ENCODE measurements at regions of chr12 and their contacts with region 1.

Region 1: GRCh38 chr12:49507139-49507538 is 31.7 kb upstream of the KCNH3 start:
- DNase-seq: no peak
- H3K4me3 ChIP-seq: no peak overlapping the region
- H3K4me1 ChIP-seq: no peaks in the 10 kb centered on the region
- H3K27me3 ChIP-seq: no peaks in the 10 kb centered on the region

Region 2: GRCh38 chr12:49366652-49367380 is 140.3 kb before region 1 on chr12:
- in situ Hi-C with region 1: loop called (anchors 5 kb)
- DNase-seq: peak; percentile 91 to 94
- H3K4me3 ChIP-seq: peak overlapping the region; percentile 81
- H3K4me1 ChIP-seq: peaks cover 22% of the 10 kb centered on the region
- H3K27me3 ChIP-seq: no peaks in the 10 kb centered on the region

Region 3: GRCh38 chr12:49422114-49422513 is 85.0 kb before region 1 on chr12:
- in situ Hi-C with region 1: no loop called
- DNase-seq: no peak
- H3K4me3 ChIP-seq: no peak overlapping the region
- H3K4me1 ChIP-seq: peaks cover 20% of the 10 kb centered on the region
- H3K27me3 ChIP-seq: no peaks in the 10 kb centered on the region